ENCODE measurements at regions of chr14 and their contacts with region 1.

Region 1: DNA sequence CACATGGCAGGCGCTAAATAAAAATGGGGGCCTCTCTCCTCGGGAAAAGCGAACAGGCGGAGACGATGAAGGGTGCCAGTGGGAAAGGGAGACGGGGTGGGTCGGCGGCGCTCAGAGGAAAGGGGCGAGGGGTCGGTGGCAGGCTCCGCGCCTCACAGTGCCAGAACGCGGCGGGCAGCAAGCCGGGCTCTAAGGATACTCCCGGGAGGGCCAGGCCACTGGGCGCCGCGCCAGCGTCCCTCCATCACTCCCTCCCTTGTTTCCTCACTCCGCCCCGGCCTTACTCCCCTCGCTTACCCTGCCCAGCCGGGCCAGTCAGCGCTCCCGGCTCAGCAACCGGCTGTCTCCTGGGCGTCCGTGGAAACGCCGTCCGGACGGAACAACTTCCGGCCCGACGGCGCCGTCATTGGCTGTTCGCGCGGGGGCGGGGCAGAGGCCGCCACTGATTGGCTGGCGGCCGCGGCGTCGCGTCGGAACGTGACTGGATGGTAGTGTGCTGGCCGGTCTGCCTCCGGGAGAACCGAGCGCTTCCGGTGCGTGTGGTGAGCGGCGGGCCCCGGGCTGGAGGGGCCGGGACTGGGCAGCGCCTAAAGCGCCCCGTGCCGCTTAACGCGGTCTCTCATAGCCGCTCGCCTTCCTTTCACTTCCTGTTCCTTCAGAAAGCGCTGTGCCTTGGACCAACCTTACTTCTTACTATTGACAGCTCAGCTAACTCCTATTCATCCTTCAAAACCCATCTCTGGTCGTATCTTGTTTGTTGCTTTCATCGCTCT is 53.0 kb downstream of the SLC25A47 start:
- H3K4me3 Mint-ChIP-seq: peak within 1 kb of the TSS; percentile 90
- H3K27ac Mint-ChIP-seq: peak within 1 kb of the TSS; percentile 100
- H3K4me1 Mint-ChIP-seq: peaks cover 57% of the 10 kb centered on the region
- H3K27me3 Mint-ChIP-seq: no peaks in the 10 kb centered on the region

Region 2: DNA sequence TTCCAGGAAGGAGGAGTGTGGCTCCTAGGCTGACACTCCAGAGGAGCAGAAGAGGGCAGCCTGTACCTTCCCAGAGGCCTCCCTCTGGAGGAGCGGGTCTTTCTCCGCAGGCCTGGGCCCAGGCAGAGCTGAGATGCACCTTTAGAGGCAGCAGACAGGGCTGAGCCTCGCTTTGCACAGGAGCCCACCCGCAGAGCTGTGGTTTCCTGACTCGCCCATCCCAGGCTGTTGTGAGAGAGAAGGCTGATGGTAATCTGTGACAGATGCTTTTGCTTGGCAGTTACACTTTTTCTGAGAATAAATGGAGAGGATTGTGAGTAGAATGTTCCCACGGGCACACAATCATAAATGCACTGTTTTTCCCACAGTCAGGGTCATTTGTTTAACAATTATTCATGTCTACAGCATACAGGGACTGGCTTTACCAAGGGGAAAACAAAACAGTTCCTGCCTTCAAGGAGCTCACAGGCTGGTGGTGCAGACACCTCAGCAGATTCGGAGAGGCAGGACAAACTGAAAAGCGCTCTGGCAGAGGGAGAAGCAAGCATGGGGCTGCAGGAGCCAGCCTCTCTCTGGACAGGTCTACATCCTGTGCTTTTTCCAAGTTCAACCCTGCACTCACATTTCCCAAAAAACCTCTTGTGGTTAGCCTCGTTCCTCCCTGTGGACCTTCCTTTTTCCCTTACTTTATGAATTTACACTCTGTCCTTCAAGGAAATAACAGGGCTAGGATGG is 297.0 kb before region 1 on chr14:
- intact Hi-C with region 1: loop called (anchors 10 kb)
- H3K4me3 Mint-ChIP-seq: no peak overlapping the region
- H3K27ac Mint-ChIP-seq: peak overlapping the region; percentile 34
- H3K4me1 Mint-ChIP-seq: peaks cover 85% of the 10 kb centered on the region
- H3K27me3 Mint-ChIP-seq: no peaks in the 10 kb centered on the region

Region 3: GRCh38 chr14:100285021-100285912 is 90.9 kb before region 1 on chr14:
- intact Hi-C with region 1: loop called (anchors 1 kb)
- H3K4me3 Mint-ChIP-seq: peak overlapping the region; percentile 77
- H3K27ac Mint-ChIP-seq: peak overlapping the region; percentile 77
- H3K4me1 Mint-ChIP-seq: peaks cover 21% of the 10 kb centered on the region
- H3K27me3 Mint-ChIP-seq: peaks cover 5% of the 10 kb centered on the region

Region 4: DNA sequence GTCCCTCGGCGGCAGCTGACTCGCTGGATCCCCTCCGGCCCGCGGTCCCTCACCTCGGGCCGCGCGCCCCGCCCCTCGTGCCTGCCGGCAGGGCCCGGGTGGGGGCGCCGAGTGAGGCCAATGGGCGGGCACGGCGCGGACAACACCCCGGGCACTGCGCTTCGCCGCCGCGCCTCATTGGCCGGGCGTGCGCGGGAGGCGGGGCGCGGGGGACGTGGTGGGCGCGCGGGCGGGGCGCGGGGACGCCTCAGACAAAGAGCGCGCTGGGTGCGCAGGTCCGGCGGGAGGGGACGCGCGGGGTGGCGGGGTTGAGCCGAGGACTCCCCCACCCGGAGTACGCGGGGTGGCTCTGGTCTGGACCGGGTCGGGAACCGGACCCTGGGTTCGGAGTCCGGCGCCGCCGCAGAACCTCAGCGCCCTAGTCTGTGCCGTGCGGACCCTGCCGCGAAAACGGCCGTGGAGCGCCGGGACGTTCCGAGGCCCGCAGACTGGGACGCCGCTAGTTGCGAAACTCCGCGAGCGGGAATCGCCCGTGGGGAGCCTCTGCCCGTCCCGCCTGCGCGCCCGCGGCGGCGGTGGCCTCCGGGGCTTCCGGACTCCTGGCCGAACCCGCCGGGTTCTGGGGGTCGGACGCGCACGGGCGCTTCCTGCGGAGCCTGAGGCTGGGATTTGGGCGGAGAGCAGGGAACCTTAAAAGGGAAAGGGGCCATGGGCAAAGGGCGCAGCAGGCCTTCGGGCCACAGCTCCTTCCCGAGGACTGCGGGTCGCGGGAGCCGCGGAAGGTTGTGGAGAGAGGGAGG is 69.5 kb before region 1 on chr14 and contains the start of gene SLC25A29:
- intact Hi-C with region 1: loop called (anchors 1 kb)
- H3K4me3 Mint-ChIP-seq: peak within 1 kb of the TSS; percentile 86
- H3K27ac Mint-ChIP-seq: peak within 1 kb of the TSS; percentile 92
- H3K4me1 Mint-ChIP-seq: peaks cover 72% of the 10 kb centered on the region
- H3K27me3 Mint-ChIP-seq: peaks cover 3% of the 10 kb centered on the region

Region 5: DNA sequence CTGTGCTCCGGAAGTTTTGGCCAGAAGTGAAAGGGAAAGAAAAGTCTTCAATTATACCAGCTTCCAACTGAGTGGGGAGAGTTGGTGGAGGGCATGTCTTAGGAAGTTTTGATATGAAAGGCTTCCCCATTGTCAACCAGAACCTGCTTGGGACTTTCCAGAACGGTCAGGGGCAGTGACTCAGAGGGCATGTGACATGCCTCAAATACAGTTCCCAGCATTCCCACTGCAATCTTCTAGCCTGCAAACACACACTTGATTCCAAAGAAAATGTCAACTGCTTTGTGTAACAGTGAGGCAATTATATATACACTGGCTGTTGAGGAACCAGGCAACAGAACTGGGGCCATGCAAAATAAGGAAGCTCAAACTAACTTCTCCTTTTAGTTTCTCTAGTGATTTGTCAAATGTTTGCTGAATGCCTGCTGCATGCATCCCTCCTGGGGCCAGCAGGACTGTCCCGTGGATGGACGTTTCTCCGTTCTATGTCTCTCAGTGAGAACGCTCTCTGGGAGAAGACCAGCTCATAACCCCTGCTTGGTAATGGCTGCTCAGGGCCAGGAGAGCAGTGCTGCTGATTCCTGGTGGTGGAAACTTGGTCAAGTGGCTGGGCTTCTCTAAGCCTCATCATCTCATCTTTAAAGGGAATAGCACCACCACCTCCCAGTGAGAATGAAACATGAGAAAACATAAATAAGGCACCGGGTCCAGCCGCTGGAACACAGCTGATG is 34.7 kb before region 1 on chr14:
- intact Hi-C with region 1: loop called (anchors 1 kb)
- H3K4me3 Mint-ChIP-seq: peak overlapping the region; percentile 59
- H3K27ac Mint-ChIP-seq: peak overlapping the region; percentile 96
- H3K4me1 Mint-ChIP-seq: peaks cover 54% of the 10 kb centered on the region
- H3K27me3 Mint-ChIP-seq: no peaks in the 10 kb centered on the region

Region 6: DNA sequence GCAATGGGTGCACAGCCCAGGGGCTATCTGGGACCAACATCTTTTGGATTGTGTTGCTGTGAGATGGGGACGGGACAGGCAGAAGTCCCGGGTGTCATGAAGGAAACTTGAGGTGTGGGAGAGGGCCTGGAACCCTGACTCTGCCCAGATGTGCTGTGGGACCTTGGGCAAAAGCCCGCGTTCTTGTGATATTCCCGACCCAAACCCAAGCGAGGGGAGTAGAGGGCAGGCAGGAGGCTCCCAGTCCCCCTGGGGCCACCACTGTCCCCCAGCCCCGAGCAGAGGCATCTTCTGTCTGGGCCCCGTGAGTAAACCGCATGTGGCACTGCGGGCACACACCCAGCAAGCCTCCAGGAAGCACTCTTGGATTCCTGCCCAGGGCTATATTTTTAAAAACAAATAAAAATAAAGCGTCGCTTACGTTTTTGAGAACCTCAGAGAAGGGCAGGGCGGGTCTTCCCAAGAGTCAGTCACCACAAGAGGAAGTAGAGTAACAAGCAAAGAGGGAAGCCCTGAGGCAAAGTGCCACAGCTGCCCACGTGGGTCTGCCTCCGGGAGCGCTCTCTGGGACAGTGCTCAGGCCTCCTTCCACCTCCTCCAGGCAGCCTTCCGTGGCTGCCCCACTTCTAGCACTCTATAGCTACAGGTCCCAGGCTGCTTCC is 171.6 kb after region 1 on chr14:
- intact Hi-C with region 1: loop called (anchors 2 kb)
- H3K4me3 Mint-ChIP-seq: peak overlapping the region; percentile 39
- H3K27ac Mint-ChIP-seq: peak overlapping the region; percentile 80
- H3K4me1 Mint-ChIP-seq: peaks cover 39% of the 10 kb centered on the region
- H3K27me3 Mint-ChIP-seq: peaks cover 50% of the 10 kb centered on the region